ENCODE measurements at regions of chr17 and their contacts with region 1.

Region 1: GRCh38 chr17:13176436-13176835 is 158.6 kb upstream of the ELAC2 start:
- DNase-seq: no peak
- ATAC-seq: no peak
- H3K4me3 Mint-ChIP-seq: no peak overlapping the region
- H3K27ac Mint-ChIP-seq: no peak overlapping the region
- H3K4me1 Mint-ChIP-seq: no peaks in the 10 kb centered on the region
- H3K27me3 Mint-ChIP-seq: no peaks in the 10 kb centered on the region
- CTCF ChIP-seq: no peak

Region 2: GRCh38 chr17:13230350-13231264 is 54.2 kb after region 1 on chr17:
- CTCF ChIA-PET with region 1: no interaction called
- POLR2A ChIA-PET with region 1: no interaction called
- intact Hi-C with region 1: loop called (anchors 10 kb)
- DNase-seq: no peak
- ATAC-seq: no peak
- H3K4me3 Mint-ChIP-seq: no peak overlapping the region
- H3K27ac Mint-ChIP-seq: no peak overlapping the region
- H3K4me1 Mint-ChIP-seq: no peaks in the 10 kb centered on the region
- H3K27me3 Mint-ChIP-seq: no peaks in the 10 kb centered on the region
- CTCF ChIP-seq: no peak